ENCODE measurements at regions of chr12 and their contacts with region 1.

Region 1: DNA sequence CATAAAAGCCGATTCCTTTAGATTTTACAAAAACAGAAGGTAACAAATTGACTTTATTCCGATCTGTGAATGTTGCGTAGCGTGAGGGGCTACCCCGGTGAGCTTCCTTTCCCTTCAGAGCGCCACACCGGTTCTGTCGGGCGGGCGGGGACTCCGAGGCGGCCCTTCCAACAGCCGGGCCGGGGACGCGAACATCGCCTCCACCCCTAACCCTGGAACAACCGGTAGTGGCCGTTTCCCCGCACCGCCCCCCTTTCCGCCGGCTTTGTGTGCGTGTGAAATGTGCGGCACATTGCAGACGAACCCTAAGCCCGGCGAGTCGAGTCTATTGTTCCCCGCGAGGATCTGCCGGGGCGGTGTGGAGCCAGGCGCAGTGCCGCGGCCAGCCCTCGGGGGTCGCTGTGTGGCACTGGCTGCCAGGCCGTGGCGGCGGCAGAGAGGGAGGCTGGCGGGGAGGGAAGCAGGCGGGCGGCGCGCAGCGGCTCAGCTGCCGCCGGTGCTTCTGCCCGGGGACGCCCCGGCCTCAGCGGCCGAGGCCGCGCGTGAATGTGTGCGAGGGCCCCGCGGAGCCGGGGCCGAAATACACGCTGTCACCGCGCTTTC is 775 bp upstream of the ARID2 start:
- DNase-seq: peak; percentile 98
- ATAC-seq: peak; percentile 70
- H3K4me3 Mint-ChIP-seq: peak overlapping the region; percentile 95
- H3K27ac Mint-ChIP-seq: peak overlapping the region; percentile 100
- H3K4me1 Mint-ChIP-seq: peaks cover 19% of the 10 kb centered on the region
- H3K27me3 Mint-ChIP-seq: no peaks in the 10 kb centered on the region

Region 2: DNA sequence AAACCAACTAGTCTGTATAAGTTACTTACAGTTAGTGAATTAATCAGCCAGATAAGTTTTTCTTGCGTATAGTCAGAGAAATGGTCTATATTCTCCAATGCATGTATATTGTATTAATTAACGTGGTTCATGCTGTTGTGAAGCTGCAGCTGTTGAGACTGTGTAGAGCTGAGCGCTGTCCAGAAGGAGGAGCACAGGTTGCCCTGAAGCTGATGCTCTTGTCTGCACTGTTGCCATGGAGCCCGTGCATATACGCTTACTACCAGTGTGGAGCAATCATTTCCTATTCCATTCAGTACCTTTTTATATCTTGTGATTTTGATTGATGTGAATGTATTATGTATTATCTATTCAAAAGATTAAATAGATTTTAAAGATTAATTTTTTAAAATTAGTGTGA is 73.5 kb before region 1 on chr12:
- CTCF ChIA-PET with region 1: interaction called, 23 read pairs
- DNase-seq: peak; percentile 77
- ATAC-seq: peak; percentile 100
- H3K4me3 Mint-ChIP-seq: no peak overlapping the region
- H3K27ac Mint-ChIP-seq: no peak overlapping the region
- H3K4me1 Mint-ChIP-seq: peaks cover 5% of the 10 kb centered on the region
- H3K27me3 Mint-ChIP-seq: peaks cover 17% of the 10 kb centered on the region

Region 3: GRCh38 chr12:45670346-45671065 is 58.2 kb before region 1 on chr12:
- CTCF ChIA-PET with region 1: interaction called, 70 read pairs
- DNase-seq: no peak
- ATAC-seq: peak; percentile 62
- H3K4me3 Mint-ChIP-seq: peak overlapping the region; percentile 28
- H3K27ac Mint-ChIP-seq: peak overlapping the region; percentile 95
- H3K4me1 Mint-ChIP-seq: peaks cover 45% of the 10 kb centered on the region
- H3K27me3 Mint-ChIP-seq: no peaks in the 10 kb centered on the region

Measured in activated CD8-positive, alpha-beta memory T cell treated with anti-CD3 and anti-CD28 coated beads, Interleukin-2, amount 10 ng/mL, durations not matched to agents 7 days and 5 days (primary cell).